Vagina (tissue), 2 donors: ENCODE measurements at regions of chr20 and their contacts with region 1.

Region 1: GRCh38 chr20:53302695-53303412 is 290.8 kb downstream of the ZNF217 start:
- DNase-seq: no peak
- H3K4me3 ChIP-seq: no peak overlapping the region
- H3K27ac ChIP-seq: no peak overlapping the region
- H3K4me1 ChIP-seq: no peaks in the 10 kb centered on the region
- H3K27me3 ChIP-seq: no peaks in the 10 kb centered on the region
- CTCF ChIP-seq: no peak
- POLR2A ChIP-seq: no peak

Region 2: DNA sequence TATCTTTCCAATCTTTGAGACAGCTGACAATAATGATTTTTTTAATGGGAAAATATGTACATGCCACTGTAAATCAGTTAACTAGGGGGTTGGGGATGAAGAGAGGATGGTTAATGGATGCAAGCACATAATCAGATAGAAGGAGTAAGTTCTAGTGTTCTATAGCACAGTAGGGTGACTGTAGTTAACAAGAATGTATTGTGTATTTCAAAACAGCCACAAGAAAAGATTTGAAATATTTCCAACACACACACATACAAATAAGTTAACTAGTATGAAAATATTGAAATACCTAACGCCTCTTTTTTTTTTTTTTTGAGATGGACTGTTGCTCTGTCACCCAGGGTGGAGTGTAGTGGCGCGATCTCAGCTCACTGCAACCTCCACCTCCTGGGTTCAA is 1347.1 kb before region 1 on chr20:
- intact Hi-C with region 1: loop called (anchors 5 kb)
- DNase-seq: no peak
- H3K4me3 ChIP-seq: no peak overlapping the region
- H3K27ac ChIP-seq: no peak overlapping the region
- H3K4me1 ChIP-seq: no peaks in the 10 kb centered on the region
- H3K27me3 ChIP-seq: no peaks in the 10 kb centered on the region
- CTCF ChIP-seq: no peak
- POLR2A ChIP-seq: no peak

Region 3: GRCh38 chr20:53331151-53331973 is 28.5 kb after region 1 on chr20:
- intact Hi-C with region 1: no loop called
- DNase-seq: no peak
- H3K4me3 ChIP-seq: no peak overlapping the region
- H3K27ac ChIP-seq: no peak overlapping the region
- H3K4me1 ChIP-seq: no peaks in the 10 kb centered on the region
- H3K27me3 ChIP-seq: no peaks in the 10 kb centered on the region
- CTCF ChIP-seq: no peak
- POLR2A ChIP-seq: no peak

Region 4: GRCh38 chr20:53934421-53935343 is 631.8 kb after region 1 on chr20:
- intact Hi-C with region 1: no loop called
- DNase-seq: no peak
- H3K4me3 ChIP-seq: no peak overlapping the region
- H3K27ac ChIP-seq: peak overlapping the region; percentile 68
- H3K4me1 ChIP-seq: peaks cover 22% of the 10 kb centered on the region
- H3K27me3 ChIP-seq: no peaks in the 10 kb centered on the region
- CTCF ChIP-seq: no peak
- POLR2A ChIP-seq: no peak